SK-N-SH (cell line): ENCODE measurements at regions of chr16 and their contacts with region 1.

Region 1: DNA sequence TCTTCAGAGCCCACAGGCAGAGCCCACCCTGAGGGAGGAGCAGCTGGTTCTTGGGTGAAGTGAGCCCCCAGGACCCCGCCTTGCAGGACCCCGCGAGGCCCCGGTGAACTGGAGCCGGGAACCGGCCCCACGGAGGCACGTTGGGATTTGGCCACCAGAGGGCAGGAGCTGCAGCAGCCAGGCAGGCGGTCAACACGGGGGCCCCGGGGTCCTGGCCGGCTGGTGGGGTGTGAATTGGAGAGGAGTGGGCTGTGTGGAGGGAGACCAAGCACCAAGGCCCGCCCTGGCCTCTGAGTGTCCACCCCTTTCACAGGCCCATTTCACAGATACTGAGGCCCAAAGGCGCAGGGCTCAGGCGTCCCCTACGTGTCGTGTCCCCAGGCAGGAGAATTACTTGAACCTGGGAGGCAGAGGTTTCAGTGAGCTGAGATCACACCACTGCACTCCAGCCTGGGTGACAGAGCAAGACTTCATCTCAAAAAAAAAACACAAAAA is 2.2 kb downstream of the DPEP1 start:
- DNase-seq: peak; percentile 87
- H3K4me3 ChIP-seq: no peak overlapping the region
- H3K27ac ChIP-seq: no peak overlapping the region
- H3K4me1 ChIP-seq: no peaks in the 10 kb centered on the region; a peak in 1 of 4 replicates
- H3K27me3 ChIP-seq: no peaks in the 10 kb centered on the region
- CTCF ChIP-seq: peak; percentile 83
- EP300 ChIP-seq: no peak
- RAD21 ChIP-seq: peak; percentile 40

Region 2: GRCh38 chr16:89565506-89566372 is 49.9 kb before region 1 on chr16:
- CTCF ChIA-PET with region 1: interaction called, 13 read pairs
- POLR2A ChIA-PET with region 1: no interaction called
- DNase-seq: peak; percentile 84
- H3K4me3 ChIP-seq: no peak overlapping the region; a peak in 1 of 4 replicates
- H3K27ac ChIP-seq: peak overlapping the region in 1 of 2 experiments; percentile 43; a peak in 3 of 4 replicates
- H3K4me1 ChIP-seq: peaks cover 19 to 44% of the 10 kb centered on the region in 2 experiments; a peak in 3 of 4 replicates
- H3K27me3 ChIP-seq: no peaks in the 10 kb centered on the region
- CTCF ChIP-seq: peak; percentile 76
- EP300 ChIP-seq: no peak
- RAD21 ChIP-seq: peak; percentile 16; the same call in 1 of the 2 replicates

Region 3: GRCh38 chr16:89599451-89599858 is 16.2 kb before region 1 on chr16:
- CTCF ChIA-PET with region 1: interaction called, 15 read pairs
- POLR2A ChIA-PET with region 1: no interaction called
- DNase-seq: peak; percentile 65
- H3K4me3 ChIP-seq: no peak overlapping the region
- H3K27ac ChIP-seq: no peak overlapping the region
- H3K4me1 ChIP-seq: peaks cover 13 to 14% of the 10 kb centered on the region in 2 experiments; a peak in 3 of 4 replicates
- H3K27me3 ChIP-seq: no peaks in the 10 kb centered on the region
- CTCF ChIP-seq: peak; percentile 55
- EP300 ChIP-seq: no peak
- RAD21 ChIP-seq: peak; percentile 38

Region 4: GRCh38 chr16:89633064-89633631 is 17.5 kb after region 1 on chr16:
- CTCF ChIA-PET with region 1: interaction called, 20 read pairs
- POLR2A ChIA-PET with region 1: no interaction called
- DNase-seq: peak; percentile 67
- H3K4me3 ChIP-seq: 0 out of 4 replicates have a peak overlapping the region, but pooled peaks of 1 of the 2 experiments have one; percentile 10
- H3K27ac ChIP-seq: peak overlapping the region in 1 of 2 experiments; percentile 27; a peak in 1 of 4 replicates
- H3K4me1 ChIP-seq: peaks cover 8 to 14% of the 10 kb centered on the region in 2 experiments; a peak in 3 of 4 replicates
- H3K27me3 ChIP-seq: no peaks in the 10 kb centered on the region
- CTCF ChIP-seq: no peak
- EP300 ChIP-seq: no peak
- RAD21 ChIP-seq: no peak

Region 5: DNA sequence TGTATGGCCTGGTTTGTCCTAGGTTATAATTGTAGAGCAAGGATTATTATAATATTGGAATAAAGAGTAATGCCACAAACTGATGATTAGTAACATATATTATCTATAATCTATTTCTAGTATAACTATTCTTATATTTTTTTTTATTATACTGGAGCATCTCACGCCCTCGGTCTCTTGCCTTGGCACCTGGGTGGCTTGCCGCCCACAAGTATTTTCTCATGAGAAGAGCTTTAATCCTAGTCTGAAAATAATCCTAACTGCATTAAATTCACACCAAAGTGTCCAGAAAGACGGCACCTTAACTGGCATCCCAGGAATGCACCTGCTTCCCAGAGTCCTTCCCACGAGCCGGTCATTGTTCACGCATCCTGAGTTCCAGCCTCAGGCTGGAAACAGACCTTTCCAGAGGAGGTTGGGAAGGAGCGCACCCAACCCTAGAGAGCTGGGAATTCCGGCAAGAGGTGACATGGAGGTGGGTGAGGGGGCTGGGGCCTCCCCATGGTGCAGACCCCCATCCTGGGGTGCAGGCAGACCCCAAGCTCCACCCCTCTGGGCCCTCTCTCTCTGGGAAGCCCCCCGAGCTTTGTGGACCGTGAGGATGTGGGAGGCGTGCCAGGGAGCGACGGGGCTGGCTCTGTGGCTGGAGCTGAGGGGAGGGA is 25.9 kb after region 1 on chr16:
- CTCF ChIA-PET with region 1: interaction called, 44 read pairs
- POLR2A ChIA-PET with region 1: interaction called, 3 read pairs
- DNase-seq: no peak
- H3K4me3 ChIP-seq: 0 out of 4 replicates have a peak overlapping the region, but pooled peaks of 1 of the 2 experiments have one; percentile 22
- H3K27ac ChIP-seq: no peak overlapping the region
- H3K4me1 ChIP-seq: peaks cover 0 to 5% of the 10 kb centered on the region in 2 experiments; a peak in 1 of 4 replicates
- H3K27me3 ChIP-seq: no peaks in the 10 kb centered on the region
- CTCF ChIP-seq: no peak
- EP300 ChIP-seq: no peak
- RAD21 ChIP-seq: no peak

Region 6: GRCh38 chr16:89700100-89700648 is 84.5 kb after region 1 on chr16:
- CTCF ChIA-PET with region 1: interaction called, 11 read pairs
- POLR2A ChIA-PET with region 1: no interaction called
- DNase-seq: peak; percentile 97
- H3K4me3 ChIP-seq: peak overlapping the region; percentile 78 to 79
- H3K27ac ChIP-seq: peak overlapping the region; percentile 71
- H3K4me1 ChIP-seq: peaks cover 9 to 29% of the 10 kb centered on the region in 2 experiments; a peak in 2 of 4 replicates
- H3K27me3 ChIP-seq: no peaks in the 10 kb centered on the region
- CTCF ChIP-seq: peak; percentile 69
- EP300 ChIP-seq: no peak
- RAD21 ChIP-seq: peak; percentile 73